K562 (cell line): ENCODE measurements at regions of chr2 and their contacts with region 1.

Region 1: GRCh38 chr2:128069769-128070168 is 21.2 kb upstream of the UGGT1 start:
- DNase-seq: no peak
- ATAC-seq: no peak
- H3K4me3 ChIP-seq: no peak overlapping the region
- H3K27ac ChIP-seq: no peak overlapping the region
- H3K4me1 ChIP-seq: no peaks in the 10 kb centered on the region; a peak in 1 of 5 replicates
- H3K27me3 ChIP-seq: no peaks in the 10 kb centered on the region
- CTCF ChIP-seq: no peak
- EP300 ChIP-seq: no peak
- POLR2A ChIP-seq: no peak
- RAD21 ChIP-seq: no peak

Region 2: DNA sequence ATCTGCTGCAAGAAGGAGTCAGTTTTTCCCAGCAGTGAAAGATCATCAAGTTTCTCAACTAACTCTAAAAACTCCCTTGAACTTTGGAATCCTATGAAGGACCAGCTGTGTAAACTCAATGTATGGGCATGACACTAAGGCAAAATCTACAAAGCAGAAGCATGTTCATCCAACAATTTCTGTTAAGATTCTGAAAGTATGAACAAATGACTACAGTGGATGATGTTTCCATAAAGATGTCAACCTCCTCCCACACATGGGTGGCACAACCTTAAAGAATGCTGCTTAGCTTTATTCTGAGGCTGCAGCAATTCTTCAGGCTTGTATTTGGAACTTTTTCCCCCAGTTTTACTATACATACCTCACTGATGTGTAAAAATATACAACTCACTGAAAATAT is 306.0 kb before region 1 on chr2:
- CTCF ChIA-PET with region 1: no interaction called
- POLR2A ChIA-PET with region 1: no interaction called
- in situ Hi-C with region 1: no loop called
- intact Hi-C with region 1: no loop called
- DNase-seq: no peak
- ATAC-seq: no peak
- H3K4me3 ChIP-seq: no peak overlapping the region
- H3K27ac ChIP-seq: no peak overlapping the region
- H3K4me1 ChIP-seq: no peaks in the 10 kb centered on the region
- H3K27me3 ChIP-seq: no peaks in the 10 kb centered on the region
- CTCF ChIP-seq: no peak
- EP300 ChIP-seq: no peak
- POLR2A ChIP-seq: no peak
- RAD21 ChIP-seq: no peak

Region 3: GRCh38 chr2:127968610-127969339 is 101.0 kb before region 1 on chr2:
- CTCF ChIA-PET with region 1: no interaction called
- POLR2A ChIA-PET with region 1: no interaction called
- in situ Hi-C with region 1: no loop called
- intact Hi-C with region 1: no loop called
- DNase-seq: no peak
- ATAC-seq: no peak
- H3K4me3 ChIP-seq: no peak overlapping the region
- H3K27ac ChIP-seq: no peak overlapping the region
- H3K4me1 ChIP-seq: no peaks in the 10 kb centered on the region
- H3K27me3 ChIP-seq: no peaks in the 10 kb centered on the region
- CTCF ChIP-seq: no peak
- EP300 ChIP-seq: no peak
- POLR2A ChIP-seq: no peak
- RAD21 ChIP-seq: no peak

Region 4: DNA sequence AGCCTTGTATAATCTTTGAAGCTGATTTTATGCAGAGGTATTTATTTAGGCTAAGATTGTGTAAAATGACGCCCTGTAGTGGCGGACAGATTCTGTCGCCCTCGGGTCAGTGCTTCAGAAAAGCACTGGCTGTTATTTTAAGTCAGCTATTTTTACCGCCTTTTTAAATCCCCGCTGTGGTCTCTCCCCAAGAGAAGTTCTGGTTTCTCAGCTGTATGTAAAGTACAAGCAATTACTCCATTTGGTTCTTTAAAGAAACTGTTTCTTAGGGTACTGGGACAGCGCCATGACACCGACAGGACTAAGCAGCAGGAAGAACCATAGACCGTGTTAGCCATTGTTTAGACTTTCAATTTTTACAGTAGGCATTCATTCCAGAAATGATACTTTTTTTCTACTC is 86.2 kb after region 1 on chr2:
- CTCF ChIA-PET with region 1: no interaction called
- POLR2A ChIA-PET with region 1: no interaction called
- in situ Hi-C with region 1: loop called (anchors 5 kb)
- intact Hi-C with region 1: no loop called
- DNase-seq: no peak
- ATAC-seq: no peak
- H3K4me3 ChIP-seq: no peak overlapping the region
- H3K27ac ChIP-seq: no peak overlapping the region
- H3K4me1 ChIP-seq: no peaks in the 10 kb centered on the region
- H3K27me3 ChIP-seq: no peaks in the 10 kb centered on the region
- CTCF ChIP-seq: no peak
- EP300 ChIP-seq: no peak
- POLR2A ChIP-seq: no peak
- RAD21 ChIP-seq: no peak

Region 5: GRCh38 chr2:128305159-128306087 is 235.7 kb after region 1 on chr2:
- CTCF ChIA-PET with region 1: no interaction called
- POLR2A ChIA-PET with region 1: no interaction called
- in situ Hi-C with region 1: no loop called
- intact Hi-C with region 1: loop called (anchors 10 kb)
- DNase-seq: peak in 3 of 4 experiments; percentile 42 to 86 (median 75)
- ATAC-seq: peak; percentile 73
- H3K4me3 ChIP-seq: no peak overlapping the region
- H3K27ac ChIP-seq: no peak overlapping the region
- H3K4me1 ChIP-seq: peaks cover 29 to 67% of the 10 kb centered on the region in 2 experiments
- H3K27me3 ChIP-seq: no peaks in the 10 kb centered on the region
- CTCF ChIP-seq: peak in 1 of 3 experiments; percentile 6; a peak in 1 of 6 replicates
- EP300 ChIP-seq: no peak
- POLR2A ChIP-seq: no peak
- RAD21 ChIP-seq: no peak

Region 6: GRCh38 chr2:128408349-128409305 is 338.9 kb after region 1 on chr2:
- CTCF ChIA-PET with region 1: no interaction called
- POLR2A ChIA-PET with region 1: no interaction called
- in situ Hi-C with region 1: no loop called
- intact Hi-C with region 1: no loop called
- DNase-seq: no peak
- ATAC-seq: no peak
- H3K4me3 ChIP-seq: no peak overlapping the region
- H3K27ac ChIP-seq: no peak overlapping the region
- H3K4me1 ChIP-seq: no peaks in the 10 kb centered on the region; a peak in 2 of 5 replicates
- H3K27me3 ChIP-seq: peaks cover 3 to 79% of the 10 kb centered on the region in 2 experiments; a peak in 4 of 5 replicates
- CTCF ChIP-seq: no peak
- EP300 ChIP-seq: no peak
- POLR2A ChIP-seq: no peak
- RAD21 ChIP-seq: no peak

Region 7: GRCh38 chr2:128754246-128754724 is 684.5 kb after region 1 on chr2:
- CTCF ChIA-PET with region 1: no interaction called
- POLR2A ChIA-PET with region 1: no interaction called
- in situ Hi-C with region 1: no loop called
- intact Hi-C with region 1: loop called (anchors 10 kb)
- DNase-seq: no peak
- ATAC-seq: no peak
- H3K4me3 ChIP-seq: no peak overlapping the region
- H3K27ac ChIP-seq: no peak overlapping the region
- H3K4me1 ChIP-seq: no peaks in the 10 kb centered on the region
- H3K27me3 ChIP-seq: peaks cover 2 to 32% of the 10 kb centered on the region in 2 experiments; a peak in 3 of 5 replicates
- CTCF ChIP-seq: no peak
- EP300 ChIP-seq: no peak
- POLR2A ChIP-seq: no peak
- RAD21 ChIP-seq: no peak